Gastrocnemius medialis (tissue), 4 donors: ENCODE measurements at regions of chr2 and their contacts with region 1.

Region 1: DNA sequence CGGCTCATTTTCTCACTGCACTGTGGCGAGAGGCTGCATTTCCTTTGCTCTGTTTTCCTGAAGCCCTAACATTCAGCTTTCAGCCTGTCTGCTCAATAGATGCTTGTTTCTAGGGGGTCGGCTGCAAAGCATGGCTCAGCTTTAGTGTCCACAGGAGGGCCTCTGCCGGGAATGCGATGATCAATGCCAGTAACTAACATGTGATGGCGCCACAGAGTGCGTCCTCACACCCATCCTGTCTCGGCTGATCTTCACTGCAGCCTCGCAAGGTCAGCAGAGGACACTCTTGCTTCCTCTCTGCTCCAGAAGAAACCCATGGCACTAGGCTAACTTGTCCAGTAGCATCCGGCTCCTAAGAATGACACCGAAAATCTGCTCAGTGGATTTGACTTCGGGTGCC is 156.4 kb upstream of the PXDN start:
- DNase-seq: no peak
- ATAC-seq: no peak
- H3K4me3 ChIP-seq: no peak overlapping the region
- H3K27ac ChIP-seq: no peak overlapping the region
- H3K4me1 ChIP-seq: no peaks in the 10 kb centered on the region
- H3K27me3 ChIP-seq: no peaks in the 10 kb centered on the region
- CTCF ChIP-seq: no peak
- POLR2A ChIP-seq: no peak

Region 2: DNA sequence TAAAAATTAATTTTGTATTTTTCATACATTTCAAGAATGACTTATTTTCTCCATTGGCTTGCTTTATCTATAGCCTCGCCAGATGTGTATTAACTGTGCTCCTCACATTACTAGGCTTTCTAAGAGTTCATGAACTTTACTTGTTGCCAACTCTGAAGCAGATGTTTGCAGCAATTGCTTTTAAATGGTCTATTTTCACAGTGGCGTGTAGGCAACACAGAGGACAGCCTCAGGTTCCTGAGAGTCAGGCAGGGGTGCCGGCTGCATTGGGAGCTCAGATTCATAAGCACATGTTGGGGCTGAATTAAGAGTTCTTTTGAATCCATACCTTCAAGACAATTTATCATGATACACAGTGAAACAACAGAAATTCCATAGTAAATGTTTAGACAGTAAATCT is 22.8 kb after region 1 on chr2:
- in situ Hi-C with region 1: no loop called
- intact Hi-C with region 1: loop called (anchors 1 kb)
- DNase-seq: no peak
- ATAC-seq: no peak
- H3K4me3 ChIP-seq: no peak overlapping the region
- H3K27ac ChIP-seq: no peak overlapping the region
- H3K4me1 ChIP-seq: no peaks in the 10 kb centered on the region
- H3K27me3 ChIP-seq: no peaks in the 10 kb centered on the region
- CTCF ChIP-seq: no peak
- POLR2A ChIP-seq: no peak